Activated naive CD4-positive, alpha-beta T cell treated with anti-CD3 and anti-CD28 coated beads for 36 hours (primary cell): ENCODE measurements at regions of chr4 and their contacts with region 1.

Region 1: GRCh38 chr4:108834835-108835384 is 72.1 kb upstream of the ETNPPL start:
- DNase-seq: no peak
- H3K4me3 Mint-ChIP-seq: no peak overlapping the region
- H3K27ac Mint-ChIP-seq: no peak overlapping the region
- H3K4me1 Mint-ChIP-seq: peaks cover 2% of the 10 kb centered on the region
- H3K27me3 Mint-ChIP-seq: no peaks in the 10 kb centered on the region

Region 2: GRCh38 chr4:108662629-108663028 is 172.3 kb before region 1 on chr4:
- CTCF ChIA-PET with region 1: no interaction called
- intact Hi-C with region 1: no loop called
- DNase-seq: no peak
- H3K4me3 Mint-ChIP-seq: no peak overlapping the region
- H3K27ac Mint-ChIP-seq: no peak overlapping the region
- H3K4me1 Mint-ChIP-seq: no peaks in the 10 kb centered on the region
- H3K27me3 Mint-ChIP-seq: no peaks in the 10 kb centered on the region

Region 3: DNA sequence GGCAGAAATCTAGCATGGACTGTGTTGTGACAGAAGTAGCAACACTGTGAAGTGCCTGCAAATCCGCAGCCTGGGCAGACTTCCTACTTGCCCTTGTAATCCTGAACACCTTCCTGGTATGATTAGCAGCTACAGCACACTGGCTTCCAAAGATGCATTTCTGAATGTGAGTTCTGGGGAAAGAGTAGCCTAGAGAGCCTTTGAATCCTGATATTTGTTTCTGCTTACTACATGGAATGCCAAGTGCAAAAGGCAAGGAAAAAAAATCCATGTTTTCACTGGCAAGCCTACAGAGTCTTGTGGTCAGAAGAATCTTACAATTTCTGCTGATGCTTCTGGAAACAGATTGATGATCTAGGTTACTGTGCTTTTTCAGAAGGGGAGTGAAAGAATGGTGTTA is 243.8 kb after region 1 on chr4:
- CTCF ChIA-PET with region 1: no interaction called
- intact Hi-C with region 1: loop called (anchors 10 kb)
- DNase-seq: no peak
- H3K4me3 Mint-ChIP-seq: no peak overlapping the region
- H3K27ac Mint-ChIP-seq: no peak overlapping the region
- H3K4me1 Mint-ChIP-seq: peaks cover 13% of the 10 kb centered on the region
- H3K27me3 Mint-ChIP-seq: no peaks in the 10 kb centered on the region

Region 4: DNA sequence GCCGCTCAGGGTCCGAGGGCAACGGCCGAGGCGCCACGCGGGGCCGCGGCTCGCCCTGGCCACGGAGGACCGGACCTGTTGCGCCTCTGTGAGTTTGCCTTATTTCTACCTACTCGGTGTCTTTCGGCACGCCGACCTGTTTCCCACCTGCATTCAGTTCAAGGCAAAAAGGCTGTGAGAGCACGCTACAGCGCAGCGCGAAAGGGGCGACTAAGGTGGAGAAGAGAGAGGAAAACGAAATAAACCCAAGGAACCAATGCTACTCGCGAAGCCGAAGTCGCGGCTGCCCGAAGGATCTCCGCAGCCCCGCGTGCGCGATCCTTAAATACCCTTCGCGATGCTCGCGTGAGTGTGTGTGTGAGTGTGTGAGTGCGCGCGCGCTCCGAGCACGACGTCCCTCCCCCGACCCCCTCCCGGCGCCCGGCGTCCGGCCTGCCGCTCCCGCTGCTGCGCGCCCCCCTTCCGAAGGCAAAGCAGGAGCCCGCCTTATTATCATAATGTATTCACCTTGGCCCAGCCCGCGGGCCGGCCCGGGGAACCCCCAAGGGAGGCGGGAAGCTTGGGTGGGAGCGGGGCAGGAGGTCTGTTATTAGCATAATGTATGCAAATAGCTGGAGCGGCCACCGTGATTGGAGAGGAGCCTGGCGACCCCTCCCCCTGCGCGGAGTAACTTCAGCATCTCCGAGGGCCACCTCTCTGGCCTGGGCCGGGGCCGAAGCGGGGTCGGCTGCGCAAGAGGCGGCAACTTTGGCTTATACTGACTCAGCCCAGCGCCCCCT is 467.6 kb after region 1 on chr4 and contains the start of gene COL25A1:
- CTCF ChIA-PET with region 1: no interaction called
- intact Hi-C with region 1: loop called (anchors 1 kb)
- DNase-seq: peak; percentile 63
- H3K4me3 Mint-ChIP-seq: peak within 1 kb of the TSS; percentile 74
- H3K27ac Mint-ChIP-seq: no peak within 1 kb of the TSS
- H3K4me1 Mint-ChIP-seq: peaks cover 12% of the 10 kb centered on the region
- H3K27me3 Mint-ChIP-seq: peaks cover 46% of the 10 kb centered on the region
- total RNA-seq, gene COL25A1: not detected

Region 5: GRCh38 chr4:109406338-109406931 is 571.5 kb after region 1 on chr4:
- CTCF ChIA-PET with region 1: no interaction called
- intact Hi-C with region 1: loop called (anchors 1 kb)
- DNase-seq: peak; percentile 52
- H3K4me3 Mint-ChIP-seq: no peak overlapping the region
- H3K27ac Mint-ChIP-seq: no peak overlapping the region
- H3K4me1 Mint-ChIP-seq: no peaks in the 10 kb centered on the region
- H3K27me3 Mint-ChIP-seq: no peaks in the 10 kb centered on the region

Region 6: GRCh38 chr4:109826719-109827118 is 991.8 kb after region 1 on chr4:
- CTCF ChIA-PET with region 1: no interaction called
- intact Hi-C with region 1: loop called (anchors 10 kb)
- DNase-seq: no peak
- H3K4me3 Mint-ChIP-seq: no peak overlapping the region
- H3K27ac Mint-ChIP-seq: no peak overlapping the region
- H3K4me1 Mint-ChIP-seq: peaks cover 5% of the 10 kb centered on the region
- H3K27me3 Mint-ChIP-seq: no peaks in the 10 kb centered on the region